ENCODE measurements at regions of chr9 and their contacts with region 1.

Region 1: GRCh38 chr9:70639853-70640814 is 225.7 kb upstream of the KLF9 start:
- DNase-seq: peak in 1 of 4 donors; percentile 27
- ATAC-seq: no peak
- H3K4me3 ChIP-seq: no peak overlapping the region
- H3K27ac ChIP-seq: no peak overlapping the region
- H3K4me1 ChIP-seq: no peaks in the 10 kb centered on the region
- H3K27me3 ChIP-seq: no peaks in the 10 kb centered on the region
- CTCF ChIP-seq: peak; percentile 14 to 75 (median 70)
- POLR2A ChIP-seq: no peak

Region 2: DNA sequence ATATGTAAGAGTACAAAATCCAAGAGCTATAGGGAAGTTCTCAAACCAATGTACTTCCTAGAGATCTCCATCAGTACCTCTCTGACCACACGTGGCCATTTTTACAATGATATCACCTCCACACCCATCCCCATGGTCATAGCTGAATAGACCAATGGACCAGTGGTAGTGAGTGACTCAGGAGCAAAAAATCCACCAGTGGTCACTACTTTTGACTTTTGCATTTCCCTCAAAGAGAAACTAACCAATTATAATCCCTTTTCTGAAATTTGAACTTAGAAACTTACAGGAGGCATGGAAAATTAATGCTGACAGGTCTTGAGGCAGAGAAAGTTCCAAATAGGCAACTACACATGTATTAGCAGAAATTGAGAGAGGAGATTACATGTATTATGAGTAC is 242.9 kb after region 1 on chr9:
- intact Hi-C with region 1: no loop called
- DNase-seq: no peak
- ATAC-seq: no peak
- H3K4me3 ChIP-seq: no peak overlapping the region
- H3K27ac ChIP-seq: no peak overlapping the region
- H3K4me1 ChIP-seq: no peaks in the 10 kb centered on the region
- H3K27me3 ChIP-seq: no peaks in the 10 kb centered on the region
- CTCF ChIP-seq: no peak
- POLR2A ChIP-seq: no peak

Region 3: DNA sequence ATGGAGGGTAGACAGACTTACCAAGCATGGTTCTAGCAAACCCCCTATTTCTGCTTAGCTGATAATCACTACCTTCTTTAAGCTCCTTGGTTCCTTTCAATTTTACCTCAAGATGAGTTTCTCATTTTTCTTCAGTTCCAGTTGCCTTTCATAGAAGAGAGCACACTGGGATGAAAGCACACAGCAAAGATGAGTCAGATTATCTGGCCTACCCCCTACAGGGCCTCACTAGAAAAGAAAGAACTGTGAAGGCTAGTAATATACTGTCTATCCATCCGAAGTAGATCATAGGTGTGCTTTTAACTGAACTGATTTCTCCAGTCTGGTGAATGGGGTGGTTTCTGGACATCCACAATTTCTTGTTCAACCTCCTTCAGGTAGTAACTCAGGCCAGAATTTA is 358.8 kb after region 1 on chr9:
- intact Hi-C with region 1: loop called (anchors 10 kb)
- DNase-seq: no peak
- ATAC-seq: no peak
- H3K4me3 ChIP-seq: no peak overlapping the region
- H3K27ac ChIP-seq: no peak overlapping the region
- H3K4me1 ChIP-seq: no peaks in the 10 kb centered on the region
- H3K27me3 ChIP-seq: no peaks in the 10 kb centered on the region
- CTCF ChIP-seq: no peak
- POLR2A ChIP-seq: no peak

Region 4: DNA sequence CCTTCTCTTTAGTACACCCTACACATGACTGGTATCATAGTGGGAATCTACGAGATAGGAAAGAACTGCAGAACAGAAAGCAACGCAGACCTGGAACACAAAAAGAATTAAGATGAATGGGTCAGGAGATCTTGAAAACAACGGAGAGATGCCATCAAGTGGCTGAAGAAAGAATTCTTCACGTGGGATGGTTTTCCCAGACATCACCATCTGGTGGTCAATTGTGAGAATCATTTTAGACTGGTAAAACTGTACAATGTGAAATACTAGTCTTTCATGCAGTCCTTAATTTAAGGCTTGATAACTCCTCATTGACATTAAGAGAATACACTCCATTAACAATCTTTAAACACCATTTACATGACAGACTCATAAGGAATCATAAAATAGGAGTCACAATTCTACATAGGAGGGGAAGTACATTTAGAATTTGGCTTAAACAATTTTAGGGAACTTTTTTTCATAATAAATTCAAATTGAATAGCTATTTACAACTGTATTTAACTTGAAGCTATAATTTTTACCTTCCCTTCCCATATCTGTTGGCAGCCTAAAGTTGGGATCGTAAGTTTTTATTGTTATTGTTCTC is 609.7 kb after region 1 on chr9:
- intact Hi-C with region 1: loop called (anchors 10 kb)
- DNase-seq: peak in 2 of 4 donors; percentile 15 to 40
- ATAC-seq: peak; percentile 79
- H3K4me3 ChIP-seq: no peak overlapping the region
- H3K27ac ChIP-seq: no peak overlapping the region
- H3K4me1 ChIP-seq: no peaks in the 10 kb centered on the region
- H3K27me3 ChIP-seq: no peaks in the 10 kb centered on the region
- CTCF ChIP-seq: peak; percentile 11 to 88 (median 76)
- POLR2A ChIP-seq: no peak